ENCODE measurements at regions of chr17 and their contacts with region 1.

Region 1: GRCh38 chr17:44363613-44364159 is at the start of gene FAM171A2:
- DNase-seq: peak; percentile 41 to 83 (median 69)
- ATAC-seq: peak; percentile 96
- H3K4me3 ChIP-seq: peak within 1 kb of the TSS; percentile 62
- H3K4me3 Mint-ChIP-seq: peak within 1 kb of the TSS; percentile 75 to 86 (median 80)
- H3K27ac ChIP-seq: no peak within 1 kb of the TSS
- H3K27ac Mint-ChIP-seq: peak within 1 kb of the TSS in 3 of 9 donors; percentile 49 to 78 (median 71)
- H3K4me1 ChIP-seq: no peaks in the 10 kb centered on the region
- H3K4me1 Mint-ChIP-seq: peaks cover 6 to 12% (median 7%) of the 10 kb centered on the region in 7 donors
- H3K27me3 ChIP-seq: no peaks in the 10 kb centered on the region
- H3K27me3 Mint-ChIP-seq: peaks cover 0 to 65% (median 30%) of the 10 kb centered on the region in 5 donors
- total RNA-seq, gene FAM171A2: 0.24 to 0.78 (median 0.39) TPM

Region 2: DNA sequence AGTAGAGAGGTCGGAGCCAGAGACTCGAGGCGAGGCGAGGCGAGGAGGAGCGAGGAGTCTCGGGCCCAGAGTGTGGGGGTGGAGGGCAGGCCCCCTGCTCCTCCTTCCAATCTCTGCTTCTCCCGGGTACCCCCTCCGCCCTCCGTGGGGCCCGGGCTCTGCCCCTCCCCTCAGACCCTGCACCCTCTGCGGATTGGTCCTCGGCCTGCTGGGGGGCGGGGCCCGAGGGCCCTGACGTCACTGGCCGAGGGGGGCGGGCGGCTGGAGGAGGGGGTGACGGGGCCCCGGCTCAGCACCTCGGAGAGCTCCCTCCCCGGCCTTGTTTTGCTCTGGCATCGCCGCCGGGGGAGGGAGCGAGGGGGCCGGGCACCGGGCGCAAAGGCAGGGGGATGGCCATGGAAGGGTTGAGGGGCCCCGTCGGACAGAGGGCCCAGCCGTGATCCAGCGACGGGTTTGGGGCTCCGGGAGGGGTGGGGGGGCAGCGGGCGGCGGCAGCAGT is 55.3 kb before region 1 on chr17 and contains the start of gene RUNDC3A:
- CTCF ChIA-PET with region 1: no interaction called
- POLR2A ChIA-PET with region 1: no interaction called
- intact Hi-C with region 1: no loop called
- DNase-seq: peak; percentile 75 to 90 (median 85)
- ATAC-seq: peak; percentile 99
- H3K4me3 ChIP-seq: no peak within 1 kb of the TSS
- H3K4me3 Mint-ChIP-seq: peak within 1 kb of the TSS; percentile 42 to 84 (median 63)
- H3K27ac ChIP-seq: no peak within 1 kb of the TSS
- H3K27ac Mint-ChIP-seq: peak within 1 kb of the TSS in 3 of 9 donors; percentile 13 to 75 (median 71)
- H3K4me1 ChIP-seq: peaks cover 0 to 5% of the 10 kb centered on the region in 2 donors
- H3K4me1 Mint-ChIP-seq: peaks cover 14 to 27% (median 15%) of the 10 kb centered on the region in 7 donors
- H3K27me3 ChIP-seq: no peaks in the 10 kb centered on the region
- H3K27me3 Mint-ChIP-seq: peaks cover 28 to 57% (median 32%) of the 10 kb centered on the region in 5 donors
- total RNA-seq, gene RUNDC3A: 0.08 to 0.22 TPM in 2 of 5 experiments, not detected in the others

Region 3: DNA sequence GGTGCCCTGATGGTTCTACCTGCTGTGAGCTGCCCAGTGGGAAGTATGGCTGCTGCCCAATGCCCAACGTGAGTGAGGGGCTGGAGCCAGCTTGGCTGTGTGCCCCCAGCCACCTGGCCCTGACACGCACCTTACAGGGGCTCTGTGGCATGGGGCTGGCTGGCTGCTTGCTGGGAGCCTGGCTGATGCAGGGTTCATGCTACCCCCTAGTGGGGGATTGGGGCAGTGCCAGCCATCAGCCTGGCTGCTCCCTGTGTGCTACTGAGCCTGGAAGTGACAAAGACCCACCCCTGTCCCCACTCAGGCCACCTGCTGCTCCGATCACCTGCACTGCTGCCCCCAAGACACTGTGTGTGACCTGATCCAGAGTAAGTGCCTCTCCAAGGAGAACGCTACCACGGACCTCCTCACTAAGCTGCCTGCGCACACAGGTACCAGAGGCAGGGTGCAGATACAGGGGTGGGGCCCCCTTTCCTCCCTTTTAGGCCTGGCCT is 12.9 kb before region 1 on chr17:
- CTCF ChIA-PET with region 1: interaction called, 9 read pairs
- POLR2A ChIA-PET with region 1: interaction called, 3 read pairs
- intact Hi-C with region 1: loop called in 1 of 2 experiments (anchors 1 kb)
- DNase-seq: peak; percentile 49 to 76 (median 70)
- ATAC-seq: peak; percentile 72
- H3K4me3 ChIP-seq: no peak overlapping the region
- H3K4me3 Mint-ChIP-seq: peak overlapping the region in 1 of 10 donors; percentile 17
- H3K27ac ChIP-seq: no peak overlapping the region
- H3K27ac Mint-ChIP-seq: no peak overlapping the region
- H3K4me1 ChIP-seq: peaks cover 4 to 6% of the 10 kb centered on the region in 2 donors
- H3K4me1 Mint-ChIP-seq: peaks cover 5 to 18% (median 12%) of the 10 kb centered on the region in 7 donors
- H3K27me3 ChIP-seq: no peaks in the 10 kb centered on the region
- H3K27me3 Mint-ChIP-seq: peaks cover 0 to 10% (median 0%) of the 10 kb centered on the region in 5 donors

Region 4: GRCh38 chr17:44385287-44386181 is 21.8 kb after region 1 on chr17:
- CTCF ChIA-PET with region 1: no interaction called
- POLR2A ChIA-PET with region 1: interaction called, 3 read pairs
- intact Hi-C with region 1: loop called in 1 of 2 experiments (anchors 1 kb)
- DNase-seq: peak; percentile 66 to 91 (median 78)
- ATAC-seq: peak; percentile 92
- H3K4me3 ChIP-seq: peak overlapping the region; percentile 66
- H3K4me3 Mint-ChIP-seq: peak overlapping the region; percentile 71 to 83 (median 79)
- H3K27ac ChIP-seq: peak overlapping the region; percentile 24
- H3K27ac Mint-ChIP-seq: peak overlapping the region in 2 of 9 donors; percentile 17 to 46
- H3K4me1 ChIP-seq: peaks cover 4 to 7% of the 10 kb centered on the region in 2 donors
- H3K4me1 Mint-ChIP-seq: peaks cover 5 to 19% (median 12%) of the 10 kb centered on the region in 7 donors
- H3K27me3 ChIP-seq: no peaks in the 10 kb centered on the region
- H3K27me3 Mint-ChIP-seq: peaks cover 4 to 31% (median 15%) of the 10 kb centered on the region in 5 donors

Region 5: DNA sequence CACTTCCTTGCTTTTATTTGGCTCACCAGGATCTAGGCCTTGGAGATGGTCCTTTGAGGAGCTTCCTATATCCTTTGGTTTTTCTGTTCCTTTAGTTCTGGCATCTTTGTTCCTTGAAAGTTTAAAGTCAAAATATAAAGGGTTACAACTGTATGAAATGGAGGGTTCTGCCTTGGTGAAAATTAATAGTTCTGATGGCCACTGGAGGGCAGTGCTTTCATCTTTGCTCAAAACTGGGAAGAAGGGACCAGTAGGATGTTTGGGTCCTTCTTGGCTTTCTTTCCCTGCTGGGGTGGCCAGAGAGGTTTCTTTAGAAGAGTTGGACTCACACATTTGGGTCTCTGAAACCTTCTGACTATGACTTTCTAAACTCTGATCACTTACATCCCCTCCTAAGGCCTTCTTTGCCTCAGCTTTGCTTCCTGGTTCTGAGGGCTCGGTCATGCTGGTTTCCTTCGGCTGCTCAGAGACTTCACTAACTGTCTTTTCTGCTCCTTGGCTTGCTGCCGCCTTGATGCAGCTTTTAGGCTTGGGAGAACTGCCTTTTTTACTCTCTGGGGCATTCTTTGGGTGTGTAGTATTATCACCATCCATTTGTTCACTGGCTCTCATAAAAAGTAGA is 36.7 kb after region 1 on chr17:
- CTCF ChIA-PET with region 1: no interaction called
- POLR2A ChIA-PET with region 1: no interaction called
- intact Hi-C with region 1: no loop called
- DNase-seq: no peak
- ATAC-seq: no peak
- H3K4me3 ChIP-seq: no peak overlapping the region
- H3K4me3 Mint-ChIP-seq: no peak overlapping the region
- H3K27ac ChIP-seq: no peak overlapping the region
- H3K27ac Mint-ChIP-seq: peak overlapping the region in 2 of 9 donors; percentile 1 to 26
- H3K4me1 ChIP-seq: no peaks in the 10 kb centered on the region
- H3K4me1 Mint-ChIP-seq: peaks cover 0 to 6% (median 0%) of the 10 kb centered on the region in 7 donors
- H3K27me3 ChIP-seq: no peaks in the 10 kb centered on the region
- H3K27me3 Mint-ChIP-seq: no peaks in the 10 kb centered on the region